Activated T-helper 1 cell treated with anti-CD3 and anti-CD28 coated beads, Interleukin-12 subunit alpha, Interleukin-12 subunit beta, Interleukin-2, Interleukin-4 antibody, amounts not matched to agents 30 ng/mL and 10 ng/mL and 1 ng/mL, durations not matched to agents 14 hours and 24 hours and 36 hours (primary cell): ENCODE measurements at regions of chr1 and their contacts with region 1.

Region 1: DNA sequence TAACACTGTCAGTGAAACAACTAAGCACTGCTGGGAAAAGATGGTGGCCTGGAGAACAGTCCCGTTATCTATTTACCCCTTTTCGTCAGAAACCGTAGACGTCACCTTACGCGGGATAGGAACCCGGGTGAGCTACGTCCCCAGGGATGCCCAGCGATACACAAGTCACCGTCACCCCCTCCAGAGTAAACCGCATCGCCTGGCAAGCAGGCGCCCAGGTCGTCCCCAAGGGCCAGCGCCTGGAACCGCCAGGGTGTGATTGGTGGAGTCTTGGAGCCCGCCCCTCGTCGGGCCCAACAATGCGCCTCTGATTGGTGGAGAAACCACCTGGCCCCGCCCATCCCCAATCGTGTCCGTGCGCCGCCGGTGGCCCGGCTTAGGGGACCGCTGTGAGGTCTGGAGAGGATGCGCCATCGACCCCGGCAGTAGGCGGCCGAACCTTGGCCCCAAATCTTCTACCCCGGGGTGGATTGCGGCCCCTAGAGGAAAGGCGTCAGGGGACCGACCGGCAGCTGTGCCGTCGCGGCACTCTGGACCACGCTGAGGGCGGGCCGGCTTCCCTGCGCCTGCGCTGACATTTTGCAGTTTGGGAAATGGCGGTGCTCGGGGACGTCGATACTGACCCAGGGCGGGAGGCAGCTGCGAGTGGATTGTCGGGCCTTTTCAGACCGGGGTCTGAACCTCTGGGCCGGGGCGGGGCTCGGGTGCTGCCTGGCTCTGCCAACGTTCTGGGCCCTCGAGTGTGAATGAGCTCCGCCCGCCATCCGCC is 34.4 kb downstream of the SLC2A1 start:
- DNase-seq: peak; percentile 91
- H3K4me3 Mint-ChIP-seq: peak overlapping the region; percentile 90
- H3K27ac Mint-ChIP-seq: peak overlapping the region; percentile 96
- H3K4me1 Mint-ChIP-seq: peaks cover 50% of the 10 kb centered on the region
- H3K27me3 Mint-ChIP-seq: no peaks in the 10 kb centered on the region

Region 2: GRCh38 chr1:42479599-42479998 is 444.7 kb before region 1 on chr1:
- intact Hi-C with region 1: no loop called
- DNase-seq: no peak
- H3K4me3 Mint-ChIP-seq: no peak overlapping the region
- H3K27ac Mint-ChIP-seq: no peak overlapping the region
- H3K4me1 Mint-ChIP-seq: no peaks in the 10 kb centered on the region
- H3K27me3 Mint-ChIP-seq: peaks cover 5% of the 10 kb centered on the region

Region 3: GRCh38 chr1:42777852-42778251 is 146.4 kb before region 1 on chr1:
- intact Hi-C with region 1: loop called (anchors 1 kb)
- DNase-seq: peak; percentile 12
- H3K4me3 Mint-ChIP-seq: no peak overlapping the region
- H3K27ac Mint-ChIP-seq: no peak overlapping the region
- H3K4me1 Mint-ChIP-seq: peaks cover 30% of the 10 kb centered on the region
- H3K27me3 Mint-ChIP-seq: no peaks in the 10 kb centered on the region

Region 4: DNA sequence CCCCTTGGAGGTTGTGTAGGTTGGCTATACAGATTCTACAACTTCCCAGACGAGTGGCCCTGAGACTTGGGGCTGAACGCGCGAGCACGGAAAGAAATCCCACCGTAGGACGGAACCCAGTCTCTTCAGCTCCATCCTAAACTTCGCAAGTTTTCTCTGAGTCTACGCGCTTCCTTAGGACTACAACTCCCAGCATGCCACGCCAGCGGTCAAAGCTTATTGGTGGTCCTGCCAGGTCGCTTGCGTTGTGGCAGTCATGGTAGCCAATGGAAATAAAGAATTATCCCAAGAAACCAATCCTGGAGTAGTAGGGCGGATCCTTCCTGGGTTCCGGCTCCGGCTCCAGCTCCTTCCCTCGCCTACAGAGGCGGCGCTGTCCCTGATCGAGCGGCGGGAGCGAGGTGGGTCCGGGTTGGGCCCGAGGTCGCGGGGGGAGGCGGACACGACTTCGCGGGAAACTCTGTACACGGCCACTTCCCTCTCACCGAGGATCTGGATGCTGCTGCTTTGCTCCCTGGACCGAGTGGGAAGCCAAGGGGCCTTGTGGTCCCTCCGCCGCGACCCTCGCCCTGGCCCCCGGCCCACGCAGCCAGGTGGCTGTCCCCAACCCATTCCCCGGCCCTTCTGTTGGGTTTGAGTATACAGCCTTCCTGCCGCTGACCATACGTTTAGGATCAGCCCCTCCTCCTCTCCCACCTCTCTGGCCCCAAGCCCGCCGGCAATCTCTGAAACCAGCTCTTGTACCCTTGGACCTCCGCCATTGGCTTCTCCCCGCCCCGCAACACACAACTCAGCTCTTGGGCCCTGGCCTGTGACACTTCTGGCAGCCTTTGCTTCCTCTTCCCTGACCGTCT is 77.8 kb before region 1 on chr1 and contains the start of gene ZNF691:
- intact Hi-C with region 1: loop called (anchors 2 kb)
- DNase-seq: peak; percentile 86
- H3K4me3 Mint-ChIP-seq: peak within 1 kb of the TSS; percentile 97
- H3K27ac Mint-ChIP-seq: peak within 1 kb of the TSS; percentile 78
- H3K4me1 Mint-ChIP-seq: peaks cover 41% of the 10 kb centered on the region
- H3K27me3 Mint-ChIP-seq: no peaks in the 10 kb centered on the region
- total RNA-seq, gene ZNF691: 10.0 and 12.9 TPM in 2 replicates

Region 5: GRCh38 chr1:42866549-42866948 is 57.7 kb before region 1 on chr1:
- intact Hi-C with region 1: no loop called
- DNase-seq: no peak
- H3K4me3 Mint-ChIP-seq: no peak overlapping the region
- H3K27ac Mint-ChIP-seq: no peak overlapping the region
- H3K4me1 Mint-ChIP-seq: no peaks in the 10 kb centered on the region
- H3K27me3 Mint-ChIP-seq: peaks cover 19% of the 10 kb centered on the region

Region 6: GRCh38 chr1:42941640-42942330 is 17.5 kb after region 1 on chr1:
- intact Hi-C with region 1: loop called (anchors 2 kb)
- DNase-seq: no peak
- H3K4me3 Mint-ChIP-seq: peak overlapping the region; percentile 28
- H3K27ac Mint-ChIP-seq: peak overlapping the region; percentile 93
- H3K4me1 Mint-ChIP-seq: peaks cover 97% of the 10 kb centered on the region
- H3K27me3 Mint-ChIP-seq: no peaks in the 10 kb centered on the region

Region 7: GRCh38 chr1:43073490-43074230 is 149.4 kb after region 1 on chr1:
- intact Hi-C with region 1: loop called (anchors 1 kb)
- DNase-seq: peak; percentile 58
- H3K4me3 Mint-ChIP-seq: no peak overlapping the region
- H3K27ac Mint-ChIP-seq: no peak overlapping the region
- H3K4me1 Mint-ChIP-seq: peaks cover 6% of the 10 kb centered on the region
- H3K27me3 Mint-ChIP-seq: peaks cover 4% of the 10 kb centered on the region